GM12878 (cell line): ENCODE measurements at regions of chr3 and their contacts with region 1.

Region 1: DNA sequence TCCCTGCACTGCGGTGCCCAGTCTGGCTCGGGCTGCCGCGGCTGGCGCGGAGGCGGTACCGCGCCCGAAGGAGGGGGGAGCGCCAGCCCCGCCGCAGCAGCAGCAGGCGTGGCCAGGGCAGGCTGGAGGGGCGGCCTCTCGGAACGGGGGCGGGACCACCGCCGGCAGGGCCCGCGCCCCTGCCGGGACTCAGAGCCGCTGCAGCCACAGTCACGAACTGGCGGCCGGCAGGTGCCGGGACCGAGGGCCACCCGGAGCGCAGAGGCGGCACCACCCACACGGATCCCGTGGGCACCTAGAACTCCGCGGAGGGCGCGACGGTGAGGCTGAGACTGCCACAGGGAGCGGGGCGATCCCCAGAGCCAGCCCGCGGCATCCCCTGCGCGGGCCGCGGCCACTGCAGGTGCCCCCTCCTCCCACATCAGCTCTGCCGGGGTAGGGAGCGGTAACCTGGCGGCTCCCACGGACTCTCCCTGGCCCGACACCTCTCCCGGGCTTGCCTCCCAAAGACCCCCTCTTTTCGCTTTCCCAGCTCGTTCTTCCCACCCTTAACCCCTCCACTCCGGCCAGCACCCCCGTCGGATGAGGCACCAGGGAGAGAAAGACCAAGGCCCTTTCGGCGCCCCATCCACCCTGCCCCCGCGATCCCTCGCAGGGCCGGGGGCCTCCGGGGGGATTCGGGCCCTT is at the start of gene VWA5B2:
- DNase-seq: no peak
- ATAC-seq: peak; percentile 96
- H3K4me3 ChIP-seq: peak within 1 kb of the TSS; percentile 29; the same call in 1 of the 2 replicates
- H3K27ac ChIP-seq: no peak within 1 kb of the TSS
- H3K4me1 ChIP-seq: no peaks in the 10 kb centered on the region
- H3K27me3 ChIP-seq: peaks cover 16 to 18% of the 10 kb centered on the region in 2 experiments
- CTCF ChIP-seq: peak in 1 of 3 experiments; percentile 18; a peak in 1 of 6 replicates
- EP300 ChIP-seq: no peak
- POLR2A ChIP-seq: no peak; the same call in 1 of the 2 replicates
- RAD21 ChIP-seq: no peak
- polyA plus RNA-seq, gene VWA5B2: not detected

Region 2: DNA sequence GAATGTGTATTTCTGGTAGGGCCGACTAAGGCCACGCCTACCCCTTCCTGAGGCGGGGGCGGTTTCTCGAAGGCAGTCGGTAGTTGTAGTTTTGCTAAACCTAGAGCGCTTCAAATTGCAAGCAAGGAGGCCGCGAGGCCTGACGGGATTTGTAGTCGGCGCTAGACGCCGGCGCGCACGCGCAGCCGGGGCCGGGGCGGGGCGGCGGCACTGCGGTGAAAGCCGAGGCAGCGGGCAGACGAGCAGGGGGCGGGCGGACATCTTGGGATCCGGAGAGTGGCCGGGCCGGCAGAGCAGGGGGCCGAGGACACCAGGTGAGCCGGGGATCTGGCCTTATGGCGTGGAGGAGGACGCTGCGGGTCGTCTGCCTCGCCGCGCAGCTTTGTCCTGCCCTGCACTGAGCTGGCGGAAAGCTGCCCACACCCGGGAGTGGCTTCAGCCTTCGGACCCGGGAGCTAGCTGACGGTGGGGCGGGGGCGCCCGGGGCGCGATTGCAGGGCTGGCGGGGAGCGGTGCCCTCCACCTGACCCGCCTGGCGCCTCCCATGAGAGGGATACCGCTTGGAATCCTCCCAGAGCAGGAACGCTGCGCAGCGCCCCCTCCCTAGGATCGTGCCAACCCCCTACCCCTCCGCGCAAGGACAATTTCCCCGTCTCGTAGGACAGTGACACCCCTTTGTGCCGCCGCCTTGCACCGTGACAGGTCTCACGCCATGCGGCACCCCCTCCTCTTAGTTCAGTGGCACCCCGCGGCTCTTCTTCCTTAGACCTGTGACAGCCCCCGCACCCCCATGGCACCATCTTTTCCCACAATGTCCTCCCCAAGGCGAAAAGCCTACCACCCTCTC is 54.7 kb before region 1 on chr3 and contains the start of gene AP2M1:
- CTCF ChIA-PET with region 1: interaction called, 12 read pairs
- POLR2A ChIA-PET with region 1: interaction called, 3 read pairs
- RAD21 ChIA-PET with region 1: no interaction called
- SMC1A ChIA-PET with region 1: no interaction called
- in situ Hi-C with region 1: no loop called
- intact Hi-C with region 1: no loop called
- DNase-seq: peak; percentile 93
- ATAC-seq: peak; percentile 97
- H3K4me3 ChIP-seq: peak within 1 kb of the TSS; percentile 81
- H3K27ac ChIP-seq: peak within 1 kb of the TSS; percentile 89
- H3K4me1 ChIP-seq: peaks cover 9% of the 10 kb centered on the region
- H3K27me3 ChIP-seq: no peaks in the 10 kb centered on the region
- CTCF ChIP-seq: 0 out of 6 replicates have a peak, but pooled peaks of 1 of the 3 experiments have one; percentile 5
- EP300 ChIP-seq: no peak
- POLR2A ChIP-seq: peak; percentile 94
- RAD21 ChIP-seq: no peak
- polyA plus RNA-seq, gene AP2M1: 65.6 to 68.9 TPM

Region 3: GRCh38 chr3:184218814-184219213 is 10.7 kb before region 1 on chr3:
- CTCF ChIA-PET with region 1: interaction called, 19 read pairs
- POLR2A ChIA-PET with region 1: no interaction called
- RAD21 ChIA-PET with region 1: interaction called, 4 read pairs
- SMC1A ChIA-PET with region 1: interaction called, 5 read pairs
- in situ Hi-C with region 1: no loop called
- intact Hi-C with region 1: no loop called
- DNase-seq: no peak
- ATAC-seq: no peak
- H3K4me3 ChIP-seq: no peak overlapping the region
- H3K27ac ChIP-seq: no peak overlapping the region
- H3K4me1 ChIP-seq: no peaks in the 10 kb centered on the region
- H3K27me3 ChIP-seq: no peaks in the 10 kb centered on the region; a peak in 1 of 4 replicates
- CTCF ChIP-seq: no peak
- EP300 ChIP-seq: no peak
- POLR2A ChIP-seq: no peak
- RAD21 ChIP-seq: no peak

Region 4: DNA sequence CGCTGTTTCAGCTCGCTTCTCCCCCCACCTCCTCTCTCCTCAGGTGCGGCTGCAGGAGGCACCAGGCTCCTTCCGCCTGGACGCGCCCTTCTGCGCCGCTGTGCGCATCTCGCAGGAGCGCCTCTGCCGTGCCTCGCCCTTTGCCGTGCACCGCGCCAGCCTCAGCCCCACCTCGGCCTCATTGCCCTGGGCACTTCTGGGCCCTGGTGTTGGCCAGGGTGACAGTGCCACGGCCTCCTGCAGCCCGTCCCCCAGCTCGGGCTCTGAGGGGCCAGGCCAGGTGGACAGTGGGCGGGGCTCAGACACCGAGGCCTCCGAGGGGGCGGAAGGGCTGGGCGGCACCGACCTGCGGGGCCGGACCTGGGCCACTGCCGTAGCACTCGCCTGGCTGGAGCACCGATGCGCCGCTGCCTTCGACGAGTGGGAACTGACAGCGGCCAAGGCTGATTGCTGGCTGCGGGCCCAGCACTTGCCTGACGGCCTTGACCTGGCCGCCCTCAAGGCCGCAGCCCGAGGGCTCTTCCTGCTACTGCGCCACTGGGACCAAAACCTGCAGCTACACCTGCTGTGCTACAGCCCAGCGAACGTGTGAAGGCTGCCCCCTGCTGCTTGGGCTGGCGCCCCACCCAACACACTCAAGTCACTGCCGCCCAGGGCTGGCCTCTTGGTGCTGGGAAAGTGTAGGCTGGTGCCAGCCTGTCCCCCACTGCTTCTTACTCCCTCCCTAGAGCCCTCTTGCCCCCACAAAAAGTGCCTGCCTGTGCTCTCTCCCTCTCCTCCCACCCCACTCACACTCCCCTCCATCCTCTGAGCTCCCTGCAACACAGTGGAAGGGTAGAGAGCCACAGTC is 12.1 kb after region 1 on chr3:
- CTCF ChIA-PET with region 1: interaction called, 23 read pairs
- POLR2A ChIA-PET with region 1: no interaction called
- RAD21 ChIA-PET with region 1: interaction called, 6 read pairs
- SMC1A ChIA-PET with region 1: interaction called, 5 read pairs
- in situ Hi-C with region 1: no loop called
- intact Hi-C with region 1: no loop called
- DNase-seq: no peak
- ATAC-seq: peak; percentile 56
- H3K4me3 ChIP-seq: no peak overlapping the region
- H3K27ac ChIP-seq: no peak overlapping the region
- H3K4me1 ChIP-seq: no peaks in the 10 kb centered on the region
- H3K27me3 ChIP-seq: no peaks in the 10 kb centered on the region
- CTCF ChIP-seq: peak in 2 of 3 experiments; percentile 28 to 43; a peak in 3 of 6 replicates
- EP300 ChIP-seq: no peak
- POLR2A ChIP-seq: no peak
- RAD21 ChIP-seq: peak; percentile 49

Region 5: GRCh38 chr3:184255291-184256039 is 25.9 kb after region 1 on chr3:
- CTCF ChIA-PET with region 1: interaction called, 69 read pairs
- POLR2A ChIA-PET with region 1: no interaction called
- RAD21 ChIA-PET with region 1: no interaction called
- SMC1A ChIA-PET with region 1: interaction called, 15 read pairs
- in situ Hi-C with region 1: no loop called
- intact Hi-C with region 1: no loop called
- DNase-seq: no peak
- ATAC-seq: no peak
- H3K4me3 ChIP-seq: no peak overlapping the region
- H3K27ac ChIP-seq: no peak overlapping the region
- H3K4me1 ChIP-seq: no peaks in the 10 kb centered on the region
- H3K27me3 ChIP-seq: peaks cover 1 to 2% of the 10 kb centered on the region in 2 experiments; a peak in 3 of 4 replicates
- CTCF ChIP-seq: no peak
- EP300 ChIP-seq: no peak
- POLR2A ChIP-seq: no peak
- RAD21 ChIP-seq: no peak

Region 6: DNA sequence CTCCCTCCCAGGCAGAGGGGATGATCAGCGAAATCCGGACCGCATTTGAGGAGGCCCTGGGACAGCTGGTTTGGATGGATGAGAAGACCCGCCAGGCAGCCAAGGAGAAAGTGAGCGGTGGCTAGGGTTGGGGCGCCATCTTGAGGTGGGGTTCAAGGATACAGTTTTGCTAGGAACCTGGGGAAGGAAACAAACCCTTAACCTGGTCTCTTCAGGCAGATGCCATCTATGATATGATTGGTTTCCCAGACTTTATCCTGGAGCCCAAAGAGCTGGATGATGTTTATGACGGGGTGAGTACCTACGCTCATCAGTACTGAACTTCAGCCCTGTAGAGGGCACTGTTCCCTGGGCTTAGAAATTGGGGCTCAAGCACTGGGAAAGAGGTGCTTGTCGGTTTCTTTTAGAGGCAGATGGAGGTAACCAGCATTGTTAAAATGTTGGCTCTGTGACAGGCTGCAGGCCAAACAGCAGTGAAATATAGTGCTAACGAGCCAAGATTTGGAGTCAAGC is 59.9 kb after region 1 on chr3:
- CTCF ChIA-PET with region 1: interaction called, 9 read pairs
- POLR2A ChIA-PET with region 1: no interaction called
- RAD21 ChIA-PET with region 1: interaction called, 6 read pairs
- SMC1A ChIA-PET with region 1: interaction called, 5 read pairs
- in situ Hi-C with region 1: no loop called
- intact Hi-C with region 1: loop called (anchors 2 kb)
- DNase-seq: no peak
- ATAC-seq: peak; percentile 88
- H3K4me3 ChIP-seq: no peak overlapping the region
- H3K27ac ChIP-seq: no peak overlapping the region
- H3K4me1 ChIP-seq: no peaks in the 10 kb centered on the region
- H3K27me3 ChIP-seq: no peaks in the 10 kb centered on the region; a peak in 1 of 4 replicates
- CTCF ChIP-seq: peak; percentile 63 to 68 (median 68)
- EP300 ChIP-seq: no peak
- POLR2A ChIP-seq: no peak
- RAD21 ChIP-seq: peak; percentile 76